G401 (cell line): ENCODE measurements at regions of chr18 and their contacts with region 1.

Region 1: DNA sequence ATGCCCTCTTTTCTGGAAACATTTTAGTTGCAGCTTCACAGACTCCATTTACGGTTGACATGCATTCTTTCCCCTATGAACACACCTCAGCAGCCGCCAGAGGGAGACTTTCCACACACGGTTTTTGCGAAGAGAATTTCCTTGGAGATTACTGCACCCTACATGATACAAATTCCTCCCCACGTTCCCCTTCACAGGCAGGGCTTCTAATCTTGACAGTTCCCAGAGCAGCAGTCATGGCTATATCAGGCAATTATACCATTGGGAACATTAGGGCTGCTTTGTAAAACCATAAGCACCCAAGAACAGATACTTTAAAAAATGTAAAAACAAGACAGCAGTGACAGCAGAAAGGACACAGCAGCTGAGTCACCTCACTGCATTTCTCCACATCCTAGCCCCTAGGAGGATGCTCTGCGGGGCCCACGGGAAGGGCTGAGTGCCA is 253.8 kb downstream of the TGIF1 start:
- DNase-seq: peak; percentile 90

Region 2: GRCh38 chr18:3593904-3594661 is 109.7 kb before region 1 on chr18:
- in situ Hi-C with region 1: no loop called
- DNase-seq: peak; percentile 92

Region 3: DNA sequence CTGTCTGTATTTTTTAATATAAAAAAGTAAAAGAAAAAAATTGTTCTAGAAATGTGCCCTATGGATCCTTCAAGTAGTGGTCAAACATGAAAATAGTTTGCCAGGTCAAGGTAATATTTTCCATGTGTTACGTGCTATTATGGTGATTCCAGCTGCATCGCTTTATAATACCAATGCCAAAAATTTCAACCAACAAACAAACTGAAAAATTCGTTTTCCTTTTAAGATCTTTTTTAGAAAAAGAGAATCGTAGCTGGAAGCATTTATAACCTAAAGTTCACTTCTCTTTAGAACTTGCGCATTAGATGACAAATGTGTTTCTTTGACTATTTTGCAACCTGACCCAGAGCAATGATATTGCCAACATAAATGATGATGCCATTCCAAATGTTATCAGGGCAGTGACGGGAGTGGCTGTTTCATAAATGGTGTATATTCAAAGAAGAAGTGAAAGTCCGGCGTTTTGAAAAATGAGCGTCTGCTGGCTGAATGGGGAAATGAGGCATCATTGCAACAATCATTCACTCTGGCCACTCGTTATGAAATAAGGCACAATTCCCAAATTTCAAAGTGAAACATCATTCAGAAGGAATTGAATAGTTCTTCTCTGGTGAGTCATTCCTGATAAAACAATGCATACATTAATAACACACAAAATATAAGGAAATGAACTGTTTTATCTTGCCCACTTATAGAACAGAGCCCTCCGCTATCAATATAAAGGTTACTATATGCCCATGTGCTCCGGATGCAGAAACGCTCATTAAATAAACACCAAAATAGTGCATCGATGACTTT is 43.6 kb after region 1 on chr18:
- in situ Hi-C with region 1: no loop called
- DNase-seq: no peak

Region 4: GRCh38 chr18:3771121-3771971 is 67.6 kb after region 1 on chr18:
- in situ Hi-C with region 1: loop called (anchors 5 kb)
- DNase-seq: peak; percentile 83

Region 5: DNA sequence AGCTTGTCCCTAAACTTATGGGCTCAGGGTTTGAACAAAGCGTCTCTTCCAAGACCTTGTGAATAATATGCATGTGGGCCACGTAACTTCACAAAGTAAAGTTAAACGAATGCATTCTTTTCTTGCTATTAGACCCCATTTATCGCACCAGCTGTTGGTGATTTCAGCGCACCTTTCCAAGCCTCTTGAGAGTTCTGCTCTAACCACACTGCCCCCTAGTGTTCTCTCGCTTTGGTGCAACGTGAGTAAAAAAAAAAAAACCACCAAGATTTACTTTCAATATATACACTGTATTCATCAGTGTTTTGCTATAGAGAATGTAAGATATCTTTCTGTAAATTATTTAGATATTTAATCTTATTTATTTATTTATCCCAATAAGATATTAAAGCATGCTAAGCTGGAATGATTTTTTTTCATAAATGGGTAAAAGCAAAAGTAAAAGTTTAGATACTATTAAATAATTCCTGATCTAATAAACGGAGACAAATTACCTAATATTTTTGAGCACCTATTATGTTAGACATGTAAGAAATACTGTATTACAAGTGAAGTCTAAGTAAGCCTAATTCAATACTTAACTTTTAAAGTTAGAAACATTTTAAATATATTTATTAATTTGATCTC is 291.8 kb after region 1 on chr18:
- in situ Hi-C with region 1: loop called (anchors 25 kb)
- DNase-seq: peak; percentile 88